Activated CD4-positive, alpha-beta T cell treated with anti-CD3 and anti-CD28 coated beads, Interleukin-2, amount 10 ng/mL, durations not matched to agents 24 days and 14 days (primary cell): ENCODE measurements at regions of chr6 and their contacts with region 1.

Region 1: GRCh38 chr6:105646391-105646867 is 243.5 kb upstream of the PREP start:
- DNase-seq: peak; percentile 88
- H3K4me3 Mint-ChIP-seq: peak overlapping the region; percentile 39
- H3K27ac Mint-ChIP-seq: peak overlapping the region; percentile 90
- H3K4me1 Mint-ChIP-seq: peaks cover 70% of the 10 kb centered on the region
- H3K27me3 Mint-ChIP-seq: no peaks in the 10 kb centered on the region

Region 2: DNA sequence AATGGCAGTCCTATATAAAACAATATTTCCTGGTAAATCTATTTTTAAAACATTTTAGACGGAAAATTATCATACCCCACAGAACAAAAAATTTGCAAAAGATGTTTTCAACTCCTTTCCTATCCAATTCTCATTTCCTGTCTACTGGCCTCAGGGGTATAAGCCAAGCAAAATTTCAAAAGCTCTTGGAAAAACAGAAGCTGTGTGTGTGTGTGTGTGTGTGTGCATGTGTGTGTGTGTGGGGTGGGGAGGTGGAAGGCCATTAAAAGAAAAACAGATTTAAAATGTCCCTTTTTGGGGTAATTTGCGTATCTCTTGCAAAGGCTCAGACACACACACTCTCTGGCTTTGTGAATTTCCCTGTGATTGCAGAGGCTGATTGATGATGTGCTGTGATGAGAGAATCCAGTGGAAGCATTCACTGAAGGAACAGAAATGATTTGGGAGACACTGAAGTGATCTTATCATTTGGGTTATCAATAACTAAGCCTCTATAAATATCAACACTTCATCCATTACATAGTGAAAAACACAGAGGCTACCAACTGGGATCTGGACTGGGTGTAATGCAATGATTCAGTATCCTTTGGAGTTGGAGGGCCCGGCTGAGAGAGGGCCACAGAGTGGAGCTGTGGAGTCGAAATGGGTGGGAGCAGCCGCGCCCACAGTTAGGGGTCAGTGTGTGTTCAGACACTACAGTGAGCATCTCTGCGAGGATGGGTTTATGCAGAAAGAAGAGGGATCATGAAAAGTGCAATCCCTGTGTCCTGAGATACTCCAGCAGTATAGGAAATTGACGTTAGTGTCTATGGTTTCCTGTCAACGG is 136.7 kb before region 1 on chr6:
- intact Hi-C with region 1: loop called (anchors 5 kb)
- DNase-seq: no peak
- H3K4me3 Mint-ChIP-seq: no peak overlapping the region
- H3K27ac Mint-ChIP-seq: no peak overlapping the region
- H3K4me1 Mint-ChIP-seq: peaks cover 15% of the 10 kb centered on the region
- H3K27me3 Mint-ChIP-seq: peaks cover 25% of the 10 kb centered on the region

Region 3: DNA sequence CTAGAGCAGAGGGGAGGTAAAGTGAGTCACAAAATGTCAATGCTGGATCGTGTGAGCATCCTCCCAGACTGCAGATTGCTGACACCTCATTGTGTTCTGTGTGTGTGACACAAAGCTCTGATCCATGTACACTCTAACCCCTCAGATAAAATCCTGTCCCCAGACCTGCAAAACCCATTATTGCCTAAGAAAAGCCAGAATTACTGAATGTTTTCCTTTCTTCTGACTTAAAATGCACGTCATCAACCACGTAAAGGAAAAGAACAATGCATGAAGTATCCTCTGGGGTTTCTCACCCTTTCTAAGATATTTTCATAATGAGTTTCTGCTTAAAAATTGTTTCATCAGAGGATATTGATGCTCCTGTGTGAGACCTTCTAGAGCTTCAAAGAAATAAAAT is 25.6 kb before region 1 on chr6:
- intact Hi-C with region 1: loop called (anchors 1 kb)
- DNase-seq: peak; percentile 69
- H3K4me3 Mint-ChIP-seq: peak overlapping the region; percentile 4
- H3K27ac Mint-ChIP-seq: peak overlapping the region; percentile 86
- H3K4me1 Mint-ChIP-seq: peaks cover 26% of the 10 kb centered on the region
- H3K27me3 Mint-ChIP-seq: peaks cover 2% of the 10 kb centered on the region

Region 4: DNA sequence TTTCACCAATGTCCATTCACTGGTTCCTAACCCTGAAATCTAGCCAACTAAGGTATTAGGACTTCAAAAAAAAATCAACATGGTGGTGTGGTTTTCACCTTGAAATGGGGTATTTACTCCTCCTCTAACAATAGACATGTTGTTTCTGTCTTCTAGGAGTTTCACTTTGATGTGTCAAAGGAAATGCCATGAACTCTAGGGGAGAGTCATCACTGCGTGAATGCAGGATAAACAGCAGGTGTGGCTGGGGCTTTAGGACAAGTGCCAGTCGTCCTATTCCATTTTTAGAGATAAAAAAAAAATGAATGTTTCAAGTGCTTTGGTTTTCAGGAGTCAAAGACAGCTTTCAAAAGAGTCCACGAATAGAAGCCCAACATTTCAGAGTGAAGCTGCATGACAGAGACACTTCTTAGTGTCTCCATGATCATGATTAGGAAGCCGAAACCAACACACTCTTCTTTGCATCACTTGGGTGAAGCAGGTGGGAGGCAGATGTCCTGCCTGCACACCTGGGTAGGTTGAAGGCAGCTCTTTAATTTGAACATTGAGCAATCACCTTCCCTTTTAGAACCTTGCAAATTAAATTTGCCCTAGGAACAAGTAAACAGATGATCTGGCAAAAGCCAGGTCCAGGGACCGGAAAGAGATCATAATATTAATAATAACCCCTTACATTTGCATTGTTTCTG is 111.2 kb after region 1 on chr6:
- intact Hi-C with region 1: loop called (anchors 1 kb)
- DNase-seq: peak; percentile 75
- H3K4me3 Mint-ChIP-seq: peak overlapping the region; percentile 46
- H3K27ac Mint-ChIP-seq: peak overlapping the region; percentile 89
- H3K4me1 Mint-ChIP-seq: peaks cover 46% of the 10 kb centered on the region
- H3K27me3 Mint-ChIP-seq: no peaks in the 10 kb centered on the region

Region 5: GRCh38 chr6:105981002-105981887 is 334.8 kb after region 1 on chr6:
- intact Hi-C with region 1: loop called (anchors 1 kb)
- DNase-seq: peak; percentile 86
- H3K4me3 Mint-ChIP-seq: peak overlapping the region; percentile 78
- H3K27ac Mint-ChIP-seq: peak overlapping the region; percentile 84
- H3K4me1 Mint-ChIP-seq: peaks cover 54% of the 10 kb centered on the region
- H3K27me3 Mint-ChIP-seq: peaks cover 6% of the 10 kb centered on the region

Region 6: GRCh38 chr6:106519460-106520394 is 873.3 kb after region 1 on chr6:
- intact Hi-C with region 1: loop called (anchors 5 kb)
- DNase-seq: peak; percentile 92
- H3K4me3 Mint-ChIP-seq: peak overlapping the region; percentile 80
- H3K27ac Mint-ChIP-seq: peak overlapping the region; percentile 97
- H3K4me1 Mint-ChIP-seq: peaks cover 59% of the 10 kb centered on the region
- H3K27me3 Mint-ChIP-seq: no peaks in the 10 kb centered on the region